ENCODE measurements at regions of chr16 and their contacts with region 1.

Region 1: DNA sequence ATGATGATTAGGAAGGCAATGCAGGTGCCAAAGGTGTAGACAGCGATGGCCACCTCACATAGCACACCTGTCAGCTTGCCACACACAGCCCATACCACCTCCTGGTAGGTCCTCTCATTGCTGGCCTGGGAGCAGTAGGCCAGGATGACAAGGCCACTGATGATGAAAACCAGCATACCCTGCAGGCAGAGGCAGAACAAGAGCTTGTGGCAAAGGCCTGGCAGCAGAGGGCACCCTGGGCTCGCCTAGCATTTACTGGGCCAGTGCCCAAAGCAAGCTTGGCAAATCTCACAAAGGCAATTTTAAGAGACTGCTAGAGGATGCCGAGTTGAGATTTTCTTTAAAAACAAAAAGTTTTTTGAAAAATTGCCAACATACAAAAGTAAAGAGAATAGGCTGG is 5.9 kb downstream of the SLC38A7 start:
- DNase-seq: peak; percentile 67
- ATAC-seq: peak; percentile 65

Region 2: GRCh38 chr16:58605562-58605961 is 73.2 kb before region 1 on chr16:
- intact Hi-C with region 1: no loop called
- DNase-seq: no peak
- ATAC-seq: no peak

Region 3: DNA sequence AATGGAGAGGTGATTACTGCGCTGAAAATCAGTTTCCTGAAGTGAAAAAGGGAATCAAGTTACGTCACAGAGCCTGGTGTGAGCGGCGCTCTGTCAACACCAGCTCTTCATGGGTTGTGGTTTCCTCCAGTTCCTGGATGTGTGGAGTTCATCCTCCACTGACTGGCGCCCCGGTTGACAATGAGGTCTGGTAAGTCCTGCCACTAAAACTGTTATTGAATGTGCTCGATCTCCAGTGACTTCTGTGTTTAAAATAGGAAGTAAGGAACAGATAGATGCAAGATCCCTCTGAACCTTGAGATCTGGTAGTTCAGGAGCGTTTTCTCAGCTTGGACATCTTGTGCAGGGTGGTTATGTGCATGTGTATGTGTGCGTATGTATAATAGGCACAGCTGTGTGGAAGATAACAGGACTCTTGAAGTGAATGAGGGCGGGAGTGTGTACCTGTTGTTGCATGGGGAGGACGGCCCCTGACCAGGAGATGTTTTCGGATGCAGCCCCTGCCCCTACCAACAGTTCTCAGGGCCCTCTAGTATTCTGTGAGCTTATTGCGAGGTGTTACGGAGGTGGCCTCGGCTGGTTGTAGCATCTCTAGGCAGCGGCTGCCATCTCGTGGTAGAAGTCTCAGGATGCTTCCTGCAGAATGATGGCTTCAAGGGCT is 77.4 kb after region 1 on chr16:
- intact Hi-C with region 1: loop called (anchors 5 kb)
- DNase-seq: peak; percentile 82
- ATAC-seq: peak; percentile 94